T-cell (primary cell): ENCODE measurements at regions of chr16 and their contacts with region 1.

Region 1: GRCh38 chr16:106623-107324 is 28.7 kb downstream of the MPG start:
- DNase-seq: peak in 34 of 35 experiments; percentile 20 to 83 (median 42)
- ATAC-seq: peak; percentile 68 to 85 (median 80)
- H3K4me3 ChIP-seq: no peak overlapping the region
- H3K4me3 Mint-ChIP-seq: no peak overlapping the region
- H3K27ac ChIP-seq: no peak overlapping the region
- H3K27ac Mint-ChIP-seq: no peak overlapping the region
- H3K4me1 ChIP-seq: peaks cover 0 to 3% of the 10 kb centered on the region in 2 experiments
- H3K4me1 Mint-ChIP-seq: peaks cover 0 to 4% (median 0%) of the 10 kb centered on the region in 3 donors
- H3K27me3 ChIP-seq: no peaks in the 10 kb centered on the region
- H3K27me3 Mint-ChIP-seq: no peaks in the 10 kb centered on the region

Region 2: DNA sequence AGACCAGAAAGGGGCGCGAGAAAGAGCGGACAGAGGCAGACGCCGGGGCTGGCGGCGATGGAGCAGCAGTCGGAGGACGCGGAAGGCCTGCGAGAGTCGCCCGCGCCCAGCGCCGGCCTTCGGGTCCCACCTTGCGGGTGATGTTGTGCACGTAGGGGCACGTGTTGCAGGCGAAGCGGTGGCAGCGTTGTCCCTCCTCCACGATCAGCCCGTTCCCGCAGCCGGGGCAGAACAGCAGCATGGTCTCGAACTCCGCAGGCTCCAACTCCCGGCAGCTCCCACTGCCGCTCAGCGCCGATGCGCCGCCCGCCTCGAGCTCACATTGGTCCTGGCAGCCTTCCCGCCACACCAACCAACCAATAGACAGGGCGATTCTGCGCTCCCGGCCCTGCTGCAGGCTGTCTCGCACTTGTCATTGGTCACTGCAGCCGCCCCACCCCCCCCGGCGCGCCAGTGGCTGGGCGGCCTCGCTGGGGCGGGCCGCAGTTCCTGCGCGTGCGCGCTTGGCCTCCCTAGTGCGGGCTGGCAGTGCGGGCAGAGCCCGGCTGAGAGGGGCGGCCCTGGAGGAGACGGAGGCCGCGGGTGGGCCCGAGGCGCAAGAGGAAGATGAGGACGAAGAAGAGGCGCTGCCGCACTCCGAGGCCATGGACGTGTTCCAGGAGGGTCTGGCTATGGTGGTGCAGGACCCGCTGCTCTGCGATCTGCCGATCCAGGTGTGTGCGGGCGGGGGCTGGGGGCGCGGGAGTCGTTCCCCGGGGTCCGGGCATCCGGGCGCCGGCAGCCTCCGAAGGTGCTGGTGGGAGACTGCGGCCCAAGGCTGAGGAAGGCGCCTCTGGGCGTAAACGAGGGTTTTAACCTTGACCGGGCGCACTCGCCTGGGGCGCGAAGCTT is 53.2 kb before region 1 on chr16 and contains the starts of genes POLR3K and SNRNP25:
- CTCF ChIA-PET with region 1: interaction called in 1 of 2 experiments, 12 read pairs
- POLR2A ChIA-PET with region 1: no interaction called
- DNase-seq: peak; percentile 90 to 99 (median 97)
- ATAC-seq: peak; percentile 95 to 97 (median 96)
- H3K4me3 ChIP-seq: peak within 1 kb of the TSS; percentile 87 to 88
- H3K4me3 Mint-ChIP-seq: peak within 1 kb of the TSS; percentile 97 to 98 (median 97)
- H3K27ac ChIP-seq: peak within 1 kb of the TSS; percentile 44
- H3K27ac Mint-ChIP-seq: peak within 1 kb of the TSS; percentile 87 to 93
- H3K4me1 ChIP-seq: peaks cover 7 to 32% of the 10 kb centered on the region in 2 experiments
- H3K4me1 Mint-ChIP-seq: peaks cover 28 to 31% (median 28%) of the 10 kb centered on the region in 3 donors
- H3K27me3 ChIP-seq: no peaks in the 10 kb centered on the region
- H3K27me3 Mint-ChIP-seq: no peaks in the 10 kb centered on the region
- total RNA-seq, gene POLR3K: 11.1 to 24.3 (median 21.3) TPM
- total RNA-seq, gene SNRNP25: 6.8 to 11.4 (median 9.0) TPM

Region 3: GRCh38 chr16:77807-78443 is 28.8 kb before region 1 on chr16 and contains the start of gene MPG:
- CTCF ChIA-PET with region 1: no interaction called
- POLR2A ChIA-PET with region 1: no interaction called
- DNase-seq: peak; percentile 54 to 86 (median 70)
- ATAC-seq: peak; percentile 86 to 89 (median 88)
- H3K4me3 ChIP-seq: peak within 1 kb of the TSS; percentile 72 to 88
- H3K4me3 Mint-ChIP-seq: peak within 1 kb of the TSS; percentile 83 to 87 (median 84)
- H3K27ac ChIP-seq: peak within 1 kb of the TSS; percentile 49
- H3K27ac Mint-ChIP-seq: peak within 1 kb of the TSS; percentile 82 to 91
- H3K4me1 ChIP-seq: peaks cover 19 to 39% of the 10 kb centered on the region in 2 experiments
- H3K4me1 Mint-ChIP-seq: peaks cover 28 to 39% (median 30%) of the 10 kb centered on the region in 3 donors
- H3K27me3 ChIP-seq: peaks cover 0 to 28% of the 10 kb centered on the region in 2 experiments
- H3K27me3 Mint-ChIP-seq: peaks cover 3 to 14% of the 10 kb centered on the region in 2 donors
- total RNA-seq, gene MPG: 18.3 to 48.2 (median 38.7) TPM

Region 4: DNA sequence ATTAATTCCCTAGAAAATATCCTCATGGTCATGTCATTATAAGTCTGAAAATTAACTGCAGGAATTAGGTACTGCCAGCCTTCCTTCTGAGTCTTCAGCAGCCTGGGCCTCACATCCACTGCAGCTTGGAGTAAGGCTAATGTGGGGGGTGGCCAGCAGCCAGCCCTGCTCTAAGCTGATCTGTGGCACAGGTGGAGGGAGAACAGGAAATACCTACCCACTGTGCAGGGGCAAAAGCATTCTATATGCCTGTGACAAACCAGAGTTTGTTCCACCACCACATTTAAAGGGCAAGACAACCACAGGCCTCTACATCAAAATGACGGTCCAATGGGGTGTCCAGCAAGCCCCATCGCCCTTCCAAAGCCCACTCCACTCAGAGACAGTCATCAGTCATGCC is 22.3 kb after region 1 on chr16:
- CTCF ChIA-PET with region 1: interaction called in 1 of 2 experiments, 18 read pairs
- POLR2A ChIA-PET with region 1: no interaction called
- DNase-seq: no peak
- ATAC-seq: no peak
- H3K4me3 ChIP-seq: no peak overlapping the region
- H3K4me3 Mint-ChIP-seq: no peak overlapping the region
- H3K27ac ChIP-seq: no peak overlapping the region
- H3K27ac Mint-ChIP-seq: no peak overlapping the region
- H3K4me1 ChIP-seq: peaks cover 6 to 32% of the 10 kb centered on the region in 2 experiments
- H3K4me1 Mint-ChIP-seq: peaks cover 24 to 29% (median 25%) of the 10 kb centered on the region in 3 donors
- H3K27me3 ChIP-seq: no peaks in the 10 kb centered on the region
- H3K27me3 Mint-ChIP-seq: no peaks in the 10 kb centered on the region